Lower leg skin (tissue), 4 donors: ENCODE measurements at regions of chr3 and their contacts with region 1.

Region 1: GRCh38 chr3:165273411-165273810 is 77.2 kb upstream of the SLITRK3 start:
- DNase-seq: no peak
- H3K4me3 ChIP-seq: no peak overlapping the region
- CTCF ChIP-seq: no peak
- POLR2A ChIP-seq: no peak

Region 2: DNA sequence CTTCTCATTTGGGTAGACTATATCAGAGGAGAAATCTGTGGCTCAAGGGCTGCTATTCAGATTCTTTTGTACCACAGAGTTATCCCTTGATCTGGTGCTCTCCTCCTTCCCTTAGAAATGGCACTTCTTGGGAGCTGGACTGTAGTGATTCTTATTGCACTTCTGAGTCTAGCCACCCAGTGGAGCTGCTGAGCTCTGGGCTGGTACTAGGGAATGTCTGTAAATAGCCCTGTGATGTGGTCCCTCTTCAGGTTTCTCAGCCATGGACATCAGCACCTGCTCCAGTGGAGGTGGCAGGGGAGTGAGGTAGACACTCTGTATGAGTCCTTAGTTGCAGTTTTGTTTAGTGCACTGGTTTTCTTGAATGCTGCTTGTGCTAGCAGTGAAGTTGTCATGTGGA is 1487.7 kb before region 1 on chr3:
- intact Hi-C with region 1: loop called (anchors 5 kb)
- DNase-seq: no peak
- H3K4me3 ChIP-seq: no peak overlapping the region
- CTCF ChIP-seq: no peak
- POLR2A ChIP-seq: no peak

Region 3: DNA sequence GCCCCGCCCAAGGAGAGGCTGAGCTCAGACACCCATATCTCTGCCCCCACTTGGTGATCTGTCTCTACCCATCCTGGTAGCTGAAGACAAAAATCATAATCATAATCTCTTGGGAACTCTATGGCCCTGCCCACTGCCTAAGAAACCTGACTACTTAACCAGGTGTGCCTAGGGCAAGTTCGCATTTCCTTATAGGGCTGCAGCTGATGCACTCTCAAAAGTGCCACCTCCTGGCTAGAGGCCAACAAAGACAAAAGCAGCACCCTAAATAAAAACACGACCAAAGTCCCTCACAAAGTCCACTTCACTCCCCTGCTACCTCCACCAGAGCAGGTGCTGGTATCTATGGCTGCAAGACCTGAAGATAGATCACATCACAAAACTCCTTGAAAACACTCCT is 173.1 kb after region 1 on chr3:
- intact Hi-C with region 1: no loop called
- DNase-seq: no peak
- H3K4me3 ChIP-seq: no peak overlapping the region
- CTCF ChIP-seq: no peak
- POLR2A ChIP-seq: no peak